AG04449 (cell line): ENCODE measurements at regions of chr15 and their contacts with region 1.

Region 1: DNA sequence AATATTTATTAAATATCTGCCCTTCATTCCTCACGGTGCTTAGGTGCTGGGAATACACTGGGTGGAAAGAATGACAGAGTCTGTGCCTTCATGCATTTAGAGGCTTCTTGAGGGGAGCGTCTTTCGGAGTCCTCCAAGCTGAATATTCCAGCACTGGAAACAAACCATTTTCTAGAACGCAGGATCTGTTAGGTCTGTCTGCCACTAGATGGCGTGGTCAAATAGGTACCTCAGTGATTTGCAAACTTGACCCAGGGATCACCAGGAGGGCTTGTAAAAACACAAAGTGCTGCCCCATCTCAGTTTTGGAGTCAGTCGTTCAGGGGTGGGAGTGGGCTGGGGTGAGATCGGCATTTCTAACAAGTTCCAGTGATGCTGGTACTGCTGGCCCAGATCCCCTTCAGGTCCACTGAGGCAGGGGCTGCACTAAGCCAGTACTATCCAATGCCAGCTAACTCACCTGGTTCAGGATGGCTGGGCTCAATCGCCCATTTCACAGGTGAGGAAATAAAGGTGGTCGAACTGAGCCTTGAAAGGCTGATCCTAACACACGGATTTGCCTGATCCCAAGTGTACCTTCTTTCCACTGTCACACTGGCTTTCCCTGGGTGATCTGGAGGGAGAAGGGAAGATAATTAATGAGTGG is 14.8 kb downstream of the ARNT2 start:
- DNase-seq: no peak
- H3K4me3 ChIP-seq: no peak overlapping the region
- CTCF ChIP-seq: peak; percentile 73

Region 2: DNA sequence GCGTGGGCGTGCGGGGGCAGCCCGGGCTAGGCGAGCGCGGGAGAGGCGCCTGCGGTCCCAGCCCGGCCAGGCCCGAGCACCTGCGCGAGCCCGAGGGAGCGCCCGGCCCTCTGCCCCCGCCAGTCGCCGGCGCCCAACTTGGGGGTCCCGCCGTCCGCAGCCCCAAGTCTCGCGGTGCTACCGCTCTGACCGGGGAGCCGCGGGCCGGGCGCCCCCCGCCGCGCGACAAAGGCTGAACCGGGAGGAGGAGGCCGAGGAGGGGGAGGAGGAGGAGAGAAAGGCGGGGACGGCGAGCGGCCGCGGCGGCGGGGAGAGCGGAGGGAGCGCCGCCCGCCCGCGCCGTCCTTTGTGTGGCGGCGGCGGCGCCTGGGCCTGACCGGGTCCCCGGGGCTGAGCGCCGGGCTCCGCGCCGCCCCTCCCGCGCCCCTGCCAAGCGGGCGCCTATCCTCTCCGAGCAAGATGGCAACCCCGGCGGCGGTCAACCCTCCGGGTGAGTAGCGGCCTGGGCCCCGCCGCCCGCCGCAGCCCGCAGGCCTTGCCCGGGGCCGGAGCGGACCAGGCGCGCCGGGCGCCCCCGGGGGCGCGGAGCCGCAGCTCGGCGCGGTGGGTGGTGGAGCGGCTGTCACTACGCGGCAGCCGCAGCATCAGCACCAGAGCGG is 14.8 kb before region 1 on chr15 and contains the start of gene ARNT2:
- CTCF ChIA-PET with region 1: interaction called, 69 read pairs
- POLR2A ChIA-PET with region 1: no interaction called
- DNase-seq: no peak
- H3K4me3 ChIP-seq: peak within 1 kb of the TSS; percentile 60
- CTCF ChIP-seq: no peak

Region 3: GRCh38 chr15:80445300-80446041 is 26.5 kb after region 1 on chr15:
- CTCF ChIA-PET with region 1: interaction called, 15 read pairs
- POLR2A ChIA-PET with region 1: no interaction called
- DNase-seq: no peak
- H3K4me3 ChIP-seq: no peak overlapping the region
- CTCF ChIP-seq: no peak